Right cardiac atrium (tissue), 5 donors: ENCODE measurements at regions of chr6 and their contacts with region 1.

Region 1: GRCh38 chr6:8219352-8219943 is 117.1 kb upstream of the EEF1E1 start:
- DNase-seq: no peak
- ATAC-seq: no peak
- H3K4me3 ChIP-seq: no peak overlapping the region
- H3K27ac ChIP-seq: no peak overlapping the region
- H3K4me1 ChIP-seq: no peaks in the 10 kb centered on the region
- H3K27me3 ChIP-seq: no peaks in the 10 kb centered on the region

Region 2: DNA sequence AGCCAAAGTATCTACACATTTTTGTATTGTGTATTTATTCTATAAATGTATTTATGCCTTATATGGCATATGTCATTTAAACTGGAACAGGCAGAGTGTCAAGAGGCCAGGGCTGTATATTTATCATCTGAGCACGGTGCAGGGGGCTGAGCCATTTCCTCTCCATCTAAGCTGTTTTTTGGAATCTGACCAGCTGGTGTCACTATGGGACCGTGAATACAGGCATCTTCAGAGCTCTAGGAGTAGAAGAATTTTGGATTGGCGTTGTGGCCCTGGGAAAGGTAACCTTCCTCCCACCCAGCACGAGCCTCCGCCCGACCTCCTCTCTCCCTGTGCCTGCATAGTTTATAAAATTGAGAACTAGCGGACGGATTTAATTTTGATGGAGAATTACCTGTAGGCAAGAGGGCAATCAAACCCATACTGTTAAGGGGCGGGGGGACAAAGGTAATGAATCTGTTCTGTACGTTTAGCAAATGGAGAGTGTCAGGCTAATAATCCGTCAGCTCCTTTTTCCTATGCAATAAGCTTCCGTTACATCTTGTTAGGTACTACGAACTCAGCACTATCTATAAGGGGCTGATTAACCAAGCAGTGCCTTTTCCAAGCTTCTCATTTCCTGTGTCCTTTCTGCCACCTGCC is 88.1 kb before region 1 on chr6:
- intact Hi-C with region 1: loop called (anchors 5 kb)
- DNase-seq: no peak
- ATAC-seq: peak; percentile 54 to 74
- H3K4me3 ChIP-seq: no peak overlapping the region
- H3K27ac ChIP-seq: no peak overlapping the region
- H3K4me1 ChIP-seq: no peaks in the 10 kb centered on the region
- H3K27me3 ChIP-seq: no peaks in the 10 kb centered on the region